Activated naive CD8-positive, alpha-beta T cell treated with anti-CD3 and anti-CD28 coated beads, Interleukin-2, amount 10 ng/mL, durations not matched to agents 7 days and 5 days (primary cell): ENCODE measurements at regions of chr5 and their contacts with region 1.

Region 1: GRCh38 chr5:141618804-141619554 is at the start of gene DIAPH1:
- DNase-seq: peak; percentile 97
- ATAC-seq: peak; percentile 82
- H3K4me3 Mint-ChIP-seq: peak within 1 kb of the TSS; percentile 88
- H3K27ac Mint-ChIP-seq: peak within 1 kb of the TSS; percentile 85
- H3K4me1 Mint-ChIP-seq: peaks cover 44% of the 10 kb centered on the region
- H3K27me3 Mint-ChIP-seq: no peaks in the 10 kb centered on the region
- total RNA-seq, gene DIAPH1: 244 to 256 TPM

Region 2: GRCh38 chr5:141598391-141599350 is 20.3 kb before region 1 on chr5:
- POLR2A ChIA-PET with region 1: interaction called, 87 read pairs
- DNase-seq: no peak
- ATAC-seq: peak; percentile 69
- H3K4me3 Mint-ChIP-seq: peak overlapping the region; percentile 30
- H3K27ac Mint-ChIP-seq: peak overlapping the region; percentile 42
- H3K4me1 Mint-ChIP-seq: peaks cover 58% of the 10 kb centered on the region
- H3K27me3 Mint-ChIP-seq: no peaks in the 10 kb centered on the region

Region 3: DNA sequence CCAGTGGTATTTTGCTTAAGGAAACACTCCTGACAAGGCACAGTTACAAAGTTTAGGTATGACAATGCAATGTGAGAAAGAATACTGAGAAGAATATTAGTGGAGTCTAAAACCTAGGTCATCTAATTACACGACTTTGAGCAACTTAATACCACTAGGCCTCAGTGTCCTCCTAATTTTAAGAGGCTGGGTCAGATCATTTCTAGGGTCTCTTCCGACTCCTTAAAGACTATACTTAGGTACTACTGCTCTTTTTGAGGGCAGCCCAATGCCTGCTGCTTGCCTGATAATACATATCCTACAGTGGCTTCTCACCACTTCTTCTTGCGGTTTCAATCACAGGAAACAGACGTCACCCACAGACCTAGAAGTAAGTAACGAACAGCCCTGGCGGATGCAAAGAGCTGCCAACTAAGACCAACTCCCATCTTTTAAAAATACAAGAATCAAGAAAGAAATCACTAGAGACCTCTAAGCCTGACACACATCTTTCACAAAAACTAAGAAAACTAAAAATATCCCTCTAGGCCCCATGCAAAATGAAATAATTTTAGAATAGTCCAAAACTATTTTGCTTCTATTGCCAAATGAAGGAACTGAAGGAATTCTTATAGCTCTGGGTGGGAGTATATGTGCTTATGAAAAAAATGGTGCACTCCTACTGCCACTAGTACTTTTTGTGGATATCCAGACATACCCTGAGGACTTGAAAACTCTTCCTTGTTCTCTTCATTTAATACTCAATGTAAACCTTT is 13.3 kb before region 1 on chr5:
- POLR2A ChIA-PET with region 1: interaction called, 80 read pairs
- DNase-seq: no peak
- ATAC-seq: peak; percentile 94
- H3K4me3 Mint-ChIP-seq: peak overlapping the region; percentile 73
- H3K27ac Mint-ChIP-seq: peak overlapping the region; percentile 87
- H3K4me1 Mint-ChIP-seq: peaks cover 69% of the 10 kb centered on the region
- H3K27me3 Mint-ChIP-seq: no peaks in the 10 kb centered on the region

Region 4: DNA sequence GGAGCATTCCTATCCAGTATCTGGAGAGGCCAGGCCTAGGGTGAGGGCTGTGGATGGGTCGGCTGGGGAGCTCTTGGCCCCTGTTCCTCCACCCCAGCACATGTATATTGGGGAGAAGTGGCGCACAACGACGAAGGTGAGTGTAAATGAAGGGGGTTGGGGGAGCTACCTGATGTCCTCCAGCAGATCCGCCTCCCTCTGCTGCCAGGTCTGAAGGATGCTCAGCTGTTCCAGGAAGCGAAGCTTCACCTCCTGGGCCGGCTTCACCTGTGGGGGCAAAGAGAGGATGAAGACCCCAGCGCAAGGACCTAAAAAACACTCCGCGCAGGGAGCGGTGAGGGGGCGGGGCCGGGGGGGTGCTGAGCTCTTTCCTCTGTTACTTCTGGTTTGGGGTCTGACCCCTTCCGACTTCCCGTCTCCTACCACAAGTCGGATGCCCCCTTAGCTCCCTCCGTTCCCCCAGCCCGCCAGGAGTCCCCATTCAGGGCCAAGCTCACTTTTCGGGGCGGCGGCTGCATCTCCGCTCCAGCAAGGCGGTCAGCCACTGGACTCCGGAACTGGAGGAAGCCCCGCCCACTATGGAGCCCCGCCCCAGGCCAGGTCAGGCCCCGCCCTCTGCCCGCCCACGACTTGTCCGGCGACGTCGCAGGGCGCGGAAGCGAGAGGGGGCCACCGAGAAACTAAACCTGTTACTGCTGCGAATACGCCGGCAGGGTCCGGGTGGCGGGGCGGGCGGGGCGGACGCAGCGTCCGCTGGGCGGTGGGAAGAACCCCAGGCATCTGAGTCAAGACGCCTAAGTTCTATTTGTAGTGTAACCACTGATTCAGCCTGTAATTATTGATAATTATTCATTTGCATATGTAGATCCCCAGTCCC is 32.1 kb after region 1 on chr5 and contains the start of gene FCHSD1:
- POLR2A ChIA-PET with region 1: interaction called, 14 read pairs
- DNase-seq: peak; percentile 89
- ATAC-seq: peak; percentile 91
- H3K4me3 Mint-ChIP-seq: peak within 1 kb of the TSS; percentile 92
- H3K27ac Mint-ChIP-seq: peak within 1 kb of the TSS; percentile 96
- H3K4me1 Mint-ChIP-seq: peaks cover 30% of the 10 kb centered on the region
- H3K27me3 Mint-ChIP-seq: no peaks in the 10 kb centered on the region
- total RNA-seq, gene FCHSD1: 98.3 to 99.1 TPM